ENCODE measurements at regions of chr4 and their contacts with region 1.

Region 1: DNA sequence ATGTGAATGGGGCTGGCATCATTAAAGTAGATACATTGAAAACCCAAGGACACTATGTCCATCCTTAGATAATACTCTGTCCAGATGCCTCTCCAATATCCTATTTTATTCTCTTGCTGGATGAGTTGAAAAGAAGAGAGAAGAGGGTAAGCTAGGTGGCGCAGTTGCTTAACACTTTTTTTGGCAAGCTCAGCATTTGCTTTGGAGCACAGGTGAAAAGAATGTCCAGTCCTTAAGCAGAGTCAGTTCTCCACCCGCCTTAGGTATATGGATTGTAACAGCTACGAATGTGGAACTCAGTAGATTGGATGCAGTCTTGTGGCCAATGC is 208.4 kb downstream of the NWD2 start:
- DNase-seq: peak; percentile 89
- H3K4me3 Mint-ChIP-seq: peak overlapping the region; percentile 71
- H3K27ac Mint-ChIP-seq: no peak overlapping the region
- H3K4me1 Mint-ChIP-seq: no peaks in the 10 kb centered on the region
- H3K27me3 Mint-ChIP-seq: peaks cover 23% of the 10 kb centered on the region
- CTCF ChIP-seq: peak; percentile 56

Region 2: DNA sequence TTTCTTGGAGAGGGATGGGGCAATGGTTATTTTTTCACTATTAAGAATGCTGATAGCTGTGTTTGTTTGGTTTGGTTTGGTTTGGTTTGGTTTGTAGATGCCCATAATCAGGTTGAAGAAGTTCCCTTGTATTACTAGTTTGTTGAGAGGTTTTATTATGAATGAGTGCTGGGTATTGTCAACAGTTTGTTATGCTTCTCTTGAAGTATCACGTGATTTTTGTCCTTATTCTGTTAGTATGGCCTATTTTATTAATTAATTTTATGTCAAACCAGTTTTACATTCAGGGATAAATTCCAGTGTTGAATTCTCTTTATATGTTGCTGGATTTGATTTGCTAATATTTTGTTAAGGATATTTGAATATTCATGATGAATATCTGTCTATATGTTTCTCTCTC is 658.2 kb before region 1 on chr4:
- CTCF ChIA-PET with region 1: no interaction called
- POLR2A ChIA-PET with region 1: no interaction called
- intact Hi-C with region 1: no loop called
- DNase-seq: no peak
- H3K4me3 Mint-ChIP-seq: no peak overlapping the region
- H3K27ac Mint-ChIP-seq: no peak overlapping the region
- H3K4me1 Mint-ChIP-seq: no peaks in the 10 kb centered on the region
- H3K27me3 Mint-ChIP-seq: no peaks in the 10 kb centered on the region
- CTCF ChIP-seq: no peak

Region 3: GRCh38 chr4:37528166-37528885 is 75.4 kb after region 1 on chr4:
- CTCF ChIA-PET with region 1: interaction called, 31 read pairs
- POLR2A ChIA-PET with region 1: interaction called, 9 read pairs
- intact Hi-C with region 1: loop called (anchors 1 kb)
- DNase-seq: peak; percentile 77
- H3K4me3 Mint-ChIP-seq: no peak overlapping the region
- H3K27ac Mint-ChIP-seq: no peak overlapping the region
- H3K4me1 Mint-ChIP-seq: peaks cover 6% of the 10 kb centered on the region
- H3K27me3 Mint-ChIP-seq: no peaks in the 10 kb centered on the region
- CTCF ChIP-seq: no peak

Region 4: DNA sequence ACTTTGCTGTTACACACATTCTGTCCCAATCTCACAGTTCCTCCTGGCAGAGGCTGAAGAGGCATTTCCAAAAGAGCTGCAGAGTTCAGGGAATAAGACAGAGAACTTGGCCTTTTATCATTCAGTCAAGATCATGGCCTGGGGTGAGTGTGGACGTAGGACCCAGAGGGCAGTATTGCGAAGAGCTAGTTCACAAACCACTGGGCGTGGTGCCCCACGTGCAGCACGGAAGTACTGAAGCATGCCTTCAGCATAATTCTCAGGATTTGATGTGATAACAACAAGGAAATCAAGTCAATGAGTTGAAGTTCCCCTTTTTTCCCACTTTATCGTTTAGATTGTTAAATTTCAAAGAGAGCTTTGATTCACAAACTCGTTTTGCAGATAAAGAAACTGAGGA is 115.6 kb after region 1 on chr4:
- CTCF ChIA-PET with region 1: interaction called, 60 read pairs
- POLR2A ChIA-PET with region 1: interaction called, 5 read pairs
- intact Hi-C with region 1: loop called (anchors 1 kb)
- DNase-seq: no peak
- H3K4me3 Mint-ChIP-seq: no peak overlapping the region
- H3K27ac Mint-ChIP-seq: no peak overlapping the region
- H3K4me1 Mint-ChIP-seq: peaks cover 4% of the 10 kb centered on the region
- H3K27me3 Mint-ChIP-seq: no peaks in the 10 kb centered on the region
- CTCF ChIP-seq: no peak

Region 5: DNA sequence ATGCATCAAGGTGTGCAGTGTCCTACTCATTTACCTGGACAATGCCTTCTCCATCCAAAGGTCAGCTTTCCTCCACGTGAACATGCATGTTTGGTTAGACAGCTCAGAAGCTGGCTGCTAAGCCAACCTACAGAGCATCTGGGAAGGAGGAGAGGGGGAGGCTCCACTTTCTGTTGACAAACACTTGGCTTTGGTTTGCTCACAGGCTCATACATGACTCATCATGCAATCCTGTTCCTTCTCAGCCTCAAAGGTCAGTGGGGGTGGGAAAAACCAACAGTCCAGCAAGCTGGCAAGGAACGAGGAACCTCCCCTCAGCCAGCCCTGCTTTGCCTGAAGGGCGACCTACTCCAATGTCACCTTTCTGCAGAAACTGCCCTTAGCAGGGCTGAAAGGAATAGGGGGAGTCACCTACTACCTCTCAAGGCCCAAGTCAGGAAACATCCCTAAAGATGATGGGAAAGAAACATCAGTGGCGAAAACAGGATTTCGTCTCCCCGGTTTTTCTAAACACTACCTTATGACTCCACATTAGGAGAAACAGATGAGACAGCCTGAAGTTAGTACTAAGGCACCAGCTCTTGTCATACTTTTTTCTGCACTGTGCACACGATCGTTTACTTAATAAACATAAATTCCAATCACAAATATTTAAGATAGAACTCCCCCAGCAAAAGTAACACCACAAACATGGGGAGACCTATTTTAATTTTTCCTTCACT is 195.3 kb after region 1 on chr4:
- CTCF ChIA-PET with region 1: no interaction called
- POLR2A ChIA-PET with region 1: no interaction called
- intact Hi-C with region 1: no loop called
- DNase-seq: peak; percentile 97
- H3K4me3 Mint-ChIP-seq: peak overlapping the region; percentile 52
- H3K27ac Mint-ChIP-seq: peak overlapping the region; percentile 81
- H3K4me1 Mint-ChIP-seq: peaks cover 5% of the 10 kb centered on the region
- H3K27me3 Mint-ChIP-seq: no peaks in the 10 kb centered on the region
- CTCF ChIP-seq: no peak

Region 6: DNA sequence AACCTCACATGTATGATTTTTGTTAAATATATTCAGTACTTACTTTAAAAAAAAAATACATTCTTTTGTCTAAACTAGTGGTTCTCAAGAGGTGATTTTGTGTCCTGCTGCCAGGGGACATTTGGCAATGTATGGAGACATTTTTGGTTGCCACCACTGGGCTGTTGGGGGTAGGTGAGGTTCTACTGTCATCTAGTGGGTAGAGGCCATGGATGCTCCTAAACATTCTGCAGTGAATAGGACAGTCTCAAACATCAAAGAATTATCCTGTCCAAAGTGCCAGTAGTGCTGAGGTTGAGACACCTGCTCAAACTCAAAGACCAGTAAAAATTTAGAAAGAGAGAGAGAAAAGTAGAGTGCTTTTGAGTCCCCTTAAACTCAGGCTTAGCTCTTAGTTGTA is 340.6 kb after region 1 on chr4:
- CTCF ChIA-PET with region 1: interaction called, 5 read pairs
- POLR2A ChIA-PET with region 1: no interaction called
- intact Hi-C with region 1: loop called (anchors 1 kb)
- DNase-seq: peak; percentile 46
- H3K4me3 Mint-ChIP-seq: no peak overlapping the region
- H3K27ac Mint-ChIP-seq: no peak overlapping the region
- H3K4me1 Mint-ChIP-seq: no peaks in the 10 kb centered on the region
- H3K27me3 Mint-ChIP-seq: no peaks in the 10 kb centered on the region
- CTCF ChIP-seq: peak; percentile 71

Region 7: DNA sequence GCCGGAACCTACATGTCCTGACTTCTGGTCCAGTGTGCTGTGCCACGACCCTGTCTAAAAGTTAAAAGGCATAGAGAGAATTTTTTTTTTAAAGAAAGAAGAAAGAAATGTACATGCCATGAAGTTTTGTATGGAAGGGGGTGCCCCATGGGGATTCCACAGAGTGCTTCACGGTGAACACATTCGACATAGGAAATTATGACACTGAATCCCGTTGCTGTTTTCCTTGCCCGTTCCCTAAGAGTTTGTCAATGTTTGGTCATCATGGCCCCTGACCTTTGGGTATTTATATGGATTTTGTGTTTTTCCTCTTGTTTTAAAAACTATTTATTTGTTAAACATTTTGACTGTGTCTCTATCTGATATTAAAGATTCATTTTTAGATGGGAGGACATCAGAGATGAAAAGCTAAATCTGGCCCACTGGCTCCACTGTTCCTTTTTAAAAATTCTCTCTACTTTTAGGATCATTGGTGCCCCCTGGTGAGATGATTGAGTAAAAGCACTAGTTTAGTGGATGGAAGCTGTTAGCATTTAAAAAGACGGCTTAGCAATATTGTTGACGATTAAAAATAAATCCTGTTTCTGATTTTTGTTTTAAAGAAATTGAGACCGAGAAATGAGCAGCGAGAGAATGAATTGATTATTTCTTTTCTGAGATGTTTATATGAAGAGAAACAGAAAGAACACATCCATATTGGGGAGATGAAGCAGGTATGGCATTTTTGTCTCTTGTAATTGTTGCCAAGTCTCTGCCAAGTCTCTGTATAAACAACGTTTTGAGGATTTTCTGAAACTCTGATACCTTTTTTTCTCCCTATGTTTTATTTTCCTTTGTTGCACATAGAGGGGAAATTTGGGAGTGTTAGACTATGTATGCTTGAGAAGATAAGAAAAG is 582.3 kb after region 1 on chr4:
- CTCF ChIA-PET with region 1: interaction called, 4 read pairs
- POLR2A ChIA-PET with region 1: no interaction called
- intact Hi-C with region 1: loop called (anchors 2 kb)
- DNase-seq: peak; percentile 79
- H3K4me3 Mint-ChIP-seq: no peak overlapping the region
- H3K27ac Mint-ChIP-seq: no peak overlapping the region
- H3K4me1 Mint-ChIP-seq: no peaks in the 10 kb centered on the region
- H3K27me3 Mint-ChIP-seq: no peaks in the 10 kb centered on the region
- CTCF ChIP-seq: peak; percentile 62

Region 8: DNA sequence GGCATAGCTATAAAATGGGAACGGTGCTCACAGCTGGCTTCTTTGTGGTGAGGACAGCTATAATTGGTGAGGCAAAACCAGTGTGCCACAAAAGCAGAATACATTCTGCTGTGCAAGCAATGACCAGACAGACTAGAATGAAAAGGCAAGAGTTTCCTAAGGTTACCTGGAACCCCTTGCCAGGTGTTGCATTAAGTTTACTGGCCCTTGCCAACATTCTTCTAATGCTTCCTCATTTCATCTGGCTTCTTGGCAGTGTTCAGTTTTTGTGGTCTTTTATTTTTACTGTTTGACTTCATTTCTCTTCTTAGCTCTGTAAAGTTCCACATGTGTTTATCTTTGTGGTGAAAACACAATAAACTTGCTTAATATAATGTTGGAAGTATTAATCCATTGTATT is 638.7 kb after region 1 on chr4:
- CTCF ChIA-PET with region 1: no interaction called
- POLR2A ChIA-PET with region 1: no interaction called
- intact Hi-C with region 1: no loop called
- DNase-seq: peak; percentile 50
- H3K4me3 Mint-ChIP-seq: no peak overlapping the region
- H3K27ac Mint-ChIP-seq: peak overlapping the region; percentile 63
- H3K4me1 Mint-ChIP-seq: peaks cover 12% of the 10 kb centered on the region
- H3K27me3 Mint-ChIP-seq: no peaks in the 10 kb centered on the region
- CTCF ChIP-seq: no peak

Measured in MCF 10A (cell line).